Esophagus muscularis mucosa (tissue), 4 donors: ENCODE measurements at regions of chr2 and their contacts with region 1.

Region 1: GRCh38 chr2:197804049-197804757 is at the start of gene PLCL1:
- DNase-seq: peak; percentile 97
- H3K4me3 ChIP-seq: peak within 1 kb of the TSS; percentile 86 to 96 (median 92)
- H3K27ac ChIP-seq: peak within 1 kb of the TSS; percentile 88 to 92 (median 91)
- H3K4me1 ChIP-seq: peaks cover 7 to 47% (median 33%) of the 10 kb centered on the region in 4 donors
- H3K27me3 ChIP-seq: no peaks in the 10 kb centered on the region
- CTCF ChIP-seq: peak; percentile 3 to 21 (median 20)
- EP300 ChIP-seq: no peak
- POLR2A ChIP-seq: peak; percentile 5
- total RNA-seq, gene PLCL1: 67.3 to 86.2 (median 79.2) TPM

Region 2: DNA sequence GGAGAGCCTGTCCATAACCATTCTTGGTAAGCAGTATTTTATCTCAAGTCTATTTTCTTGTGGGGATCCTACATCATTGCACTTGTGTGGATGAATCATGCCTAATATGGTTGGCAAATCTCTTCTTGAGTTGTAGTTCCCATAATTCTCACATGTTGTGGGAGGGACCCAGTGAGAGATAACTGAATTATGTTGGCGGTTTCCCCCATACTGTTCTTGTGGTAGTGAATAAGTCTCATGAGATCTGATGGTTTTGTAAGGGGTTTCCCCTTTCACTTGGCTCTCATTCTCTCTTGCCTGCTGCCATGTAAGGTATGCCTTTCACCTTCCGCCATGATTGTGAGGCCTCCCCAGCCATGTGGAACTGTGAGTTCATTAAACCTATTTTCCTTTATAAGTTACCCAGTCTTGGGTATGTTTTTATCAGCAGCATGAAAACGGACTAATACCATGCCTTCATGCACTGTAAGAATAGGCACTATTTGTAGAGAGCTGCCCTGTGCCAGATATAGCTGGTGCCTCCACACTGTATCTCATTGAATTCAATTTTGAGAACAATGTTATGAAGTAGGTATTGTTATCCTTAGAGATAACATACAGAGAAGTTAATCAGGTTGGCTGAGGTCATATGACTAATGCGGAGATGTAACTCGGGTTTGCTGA is 148.5 kb after region 1 on chr2:
- intact Hi-C with region 1: loop called (anchors 10 kb)
- DNase-seq: no peak
- H3K4me3 ChIP-seq: no peak overlapping the region
- H3K27ac ChIP-seq: no peak overlapping the region
- H3K4me1 ChIP-seq: peaks cover 26 to 56% (median 39%) of the 10 kb centered on the region in 4 donors
- H3K27me3 ChIP-seq: no peaks in the 10 kb centered on the region
- CTCF ChIP-seq: no peak
- EP300 ChIP-seq: no peak
- POLR2A ChIP-seq: no peak

Region 3: GRCh38 chr2:197986977-197987376 is 182.8 kb after region 1 on chr2:
- intact Hi-C with region 1: loop called (anchors 10 kb)
- DNase-seq: no peak
- H3K4me3 ChIP-seq: no peak overlapping the region
- H3K27ac ChIP-seq: no peak overlapping the region
- H3K4me1 ChIP-seq: peaks cover 7 to 31% (median 30%) of the 10 kb centered on the region in 4 donors
- H3K27me3 ChIP-seq: no peaks in the 10 kb centered on the region
- CTCF ChIP-seq: no peak
- EP300 ChIP-seq: no peak
- POLR2A ChIP-seq: no peak

Region 4: DNA sequence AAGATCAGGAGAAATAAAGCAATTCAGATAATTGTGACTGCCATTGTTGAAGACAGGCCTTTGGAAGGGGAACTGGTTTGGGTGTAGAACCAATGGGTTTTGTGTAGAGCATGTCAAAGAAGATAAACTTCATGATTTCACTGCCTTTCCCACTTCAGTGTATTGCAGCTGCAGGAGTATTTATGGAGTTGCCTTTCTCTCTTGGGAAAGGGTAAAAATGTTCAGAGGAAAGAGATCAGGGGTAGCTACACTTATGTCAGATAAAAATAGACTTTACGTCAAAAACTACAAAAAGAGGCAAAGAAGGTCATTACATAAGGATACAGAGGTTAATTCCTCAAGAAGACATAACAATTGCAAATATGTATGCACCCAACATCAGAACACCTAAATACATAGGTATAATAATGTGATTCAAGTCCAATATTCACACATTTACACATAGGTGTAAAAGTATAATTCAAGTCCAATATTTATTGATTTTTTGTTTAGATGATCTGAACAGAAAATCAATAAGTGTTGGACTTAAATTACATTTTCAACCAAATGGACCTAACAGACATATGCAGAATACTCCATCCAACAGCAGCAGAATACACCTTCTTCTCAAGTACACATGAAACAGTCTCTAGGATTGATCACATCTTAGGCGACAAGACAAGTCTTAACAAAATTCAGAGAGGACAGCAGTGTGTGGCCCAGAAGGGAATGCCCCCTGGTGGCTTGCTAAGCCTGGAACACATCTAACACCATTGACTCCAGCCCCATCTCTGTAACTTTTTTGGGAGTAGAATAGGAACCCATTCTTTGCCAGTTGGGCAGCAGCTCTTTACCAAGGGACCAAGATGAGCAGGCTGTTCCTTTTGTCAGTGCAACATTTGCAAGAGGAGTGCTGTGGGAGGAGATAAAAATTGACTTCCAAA is 249.8 kb after region 1 on chr2:
- intact Hi-C with region 1: loop called (anchors 5 kb)
- DNase-seq: no peak
- H3K4me3 ChIP-seq: no peak overlapping the region
- H3K27ac ChIP-seq: no peak overlapping the region
- H3K4me1 ChIP-seq: peaks cover 13 to 31% (median 23%) of the 10 kb centered on the region in 4 donors
- H3K27me3 ChIP-seq: no peaks in the 10 kb centered on the region
- CTCF ChIP-seq: peak in 1 of 3 experiments; percentile 45
- EP300 ChIP-seq: no peak
- POLR2A ChIP-seq: no peak

Region 5: DNA sequence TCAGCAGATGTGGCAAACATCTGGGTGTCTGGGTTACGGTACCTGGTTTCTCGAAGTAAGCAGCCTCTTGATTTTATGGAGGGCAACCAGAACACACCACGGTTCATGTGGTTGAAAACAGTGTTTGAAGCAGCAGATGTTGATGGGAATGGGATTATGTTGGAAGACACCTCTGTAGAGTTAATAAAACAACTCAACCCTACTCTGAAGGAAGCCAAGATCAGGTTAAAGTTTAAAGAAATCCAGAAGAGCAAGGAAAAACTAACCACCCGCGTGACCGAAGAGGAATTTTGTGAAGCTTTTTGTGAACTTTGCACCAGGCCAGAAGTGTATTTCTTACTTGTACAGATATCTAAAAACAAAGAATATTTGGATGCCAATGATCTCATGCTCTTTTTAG is 279.9 kb after region 1 on chr2:
- intact Hi-C with region 1: no loop called
- DNase-seq: no peak
- H3K4me3 ChIP-seq: no peak overlapping the region
- H3K27ac ChIP-seq: no peak overlapping the region
- H3K4me1 ChIP-seq: peaks cover 0 to 6% (median 2%) of the 10 kb centered on the region in 4 donors
- H3K27me3 ChIP-seq: no peaks in the 10 kb centered on the region
- CTCF ChIP-seq: no peak
- EP300 ChIP-seq: no peak
- POLR2A ChIP-seq: no peak

Region 6: GRCh38 chr2:198127627-198128026 is 323.4 kb after region 1 on chr2:
- intact Hi-C with region 1: loop called (anchors 2 kb)
- DNase-seq: no peak
- H3K4me3 ChIP-seq: no peak overlapping the region
- H3K27ac ChIP-seq: no peak overlapping the region
- H3K4me1 ChIP-seq: peaks cover 8 to 28% (median 16%) of the 10 kb centered on the region in 4 donors
- H3K27me3 ChIP-seq: no peaks in the 10 kb centered on the region
- CTCF ChIP-seq: peak; percentile 55 to 66 (median 59)
- EP300 ChIP-seq: no peak
- POLR2A ChIP-seq: no peak

Region 7: DNA sequence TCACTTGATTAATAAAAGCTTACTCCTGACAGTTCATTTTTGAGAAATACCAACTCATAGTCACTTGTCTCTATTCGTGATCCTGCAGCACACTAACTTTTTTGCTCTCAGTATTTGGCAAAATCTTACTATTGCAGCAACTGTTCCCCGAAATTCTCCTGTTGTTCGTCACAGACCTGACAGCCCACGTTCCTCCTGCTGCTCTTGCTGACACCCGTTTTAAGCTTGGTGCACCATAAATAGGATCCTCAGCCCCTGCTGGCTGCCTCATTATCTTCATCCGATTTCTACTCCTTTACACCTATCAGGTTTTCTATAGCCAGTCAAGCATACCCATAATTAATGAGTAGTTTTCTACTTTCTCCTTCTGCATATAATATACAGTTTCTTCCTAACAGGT is 369.0 kb after region 1 on chr2:
- intact Hi-C with region 1: loop called (anchors 5 kb)
- DNase-seq: no peak
- H3K4me3 ChIP-seq: no peak overlapping the region
- H3K27ac ChIP-seq: peak overlapping the region in 3 of 4 donors; percentile 40 to 65 (median 62)
- H3K4me1 ChIP-seq: peaks cover 0 to 21% (median 15%) of the 10 kb centered on the region in 4 donors
- H3K27me3 ChIP-seq: no peaks in the 10 kb centered on the region
- CTCF ChIP-seq: peak in 1 of 3 experiments; percentile 17
- EP300 ChIP-seq: peak; percentile 70
- POLR2A ChIP-seq: no peak

Region 8: GRCh38 chr2:198296665-198297308 is 492.6 kb after region 1 on chr2:
- intact Hi-C with region 1: loop called (anchors 2 kb)
- DNase-seq: no peak
- H3K4me3 ChIP-seq: no peak overlapping the region
- H3K27ac ChIP-seq: no peak overlapping the region
- H3K4me1 ChIP-seq: peaks cover 0 to 8% (median 3%) of the 10 kb centered on the region in 4 donors
- H3K27me3 ChIP-seq: no peaks in the 10 kb centered on the region
- CTCF ChIP-seq: peak; percentile 75 to 87 (median 84)
- EP300 ChIP-seq: no peak
- POLR2A ChIP-seq: no peak